ENCODE measurements at regions of chr2 and their contacts with region 1.

Region 1: DNA sequence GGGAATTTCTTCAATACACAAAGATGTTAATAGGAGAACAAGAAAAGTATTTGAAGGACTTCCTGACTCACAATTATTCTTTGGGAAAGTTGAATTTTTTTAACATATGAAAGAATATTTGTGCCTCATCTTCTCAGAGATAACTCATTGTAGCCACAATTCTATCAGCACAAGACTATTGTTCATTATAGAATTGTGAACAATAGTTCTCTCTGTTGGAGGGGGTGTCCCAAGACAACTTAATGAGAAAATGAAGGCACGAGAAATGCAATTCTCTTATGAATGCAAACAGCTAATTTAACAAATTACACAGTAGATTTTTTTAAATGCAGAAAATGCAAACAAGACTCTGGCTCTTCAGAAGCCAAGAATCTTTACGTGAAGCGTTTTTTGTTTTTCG is 157.0 kb downstream of the BARD1 start:
- DNase-seq: no peak
- ATAC-seq: no peak
- H3K4me3 Mint-ChIP-seq: no peak overlapping the region
- H3K27ac Mint-ChIP-seq: no peak overlapping the region
- H3K4me1 Mint-ChIP-seq: no peaks in the 10 kb centered on the region
- H3K27me3 Mint-ChIP-seq: peaks cover 3% of the 10 kb centered on the region

Region 2: GRCh38 chr2:214593727-214594126 is 58.7 kb before region 1 on chr2:
- CTCF ChIA-PET with region 1: no interaction called
- POLR2A ChIA-PET with region 1: no interaction called
- intact Hi-C with region 1: no loop called
- DNase-seq: no peak
- ATAC-seq: no peak
- H3K4me3 Mint-ChIP-seq: no peak overlapping the region
- H3K27ac Mint-ChIP-seq: no peak overlapping the region
- H3K4me1 Mint-ChIP-seq: no peaks in the 10 kb centered on the region
- H3K27me3 Mint-ChIP-seq: peaks cover 2% of the 10 kb centered on the region

Region 3: GRCh38 chr2:214624166-214624760 is 28.2 kb before region 1 on chr2:
- CTCF ChIA-PET with region 1: no interaction called
- POLR2A ChIA-PET with region 1: no interaction called
- intact Hi-C with region 1: loop called in 1 of 2 experiments (anchors 1 kb)
- DNase-seq: no peak
- ATAC-seq: no peak
- H3K4me3 Mint-ChIP-seq: no peak overlapping the region
- H3K27ac Mint-ChIP-seq: no peak overlapping the region
- H3K4me1 Mint-ChIP-seq: no peaks in the 10 kb centered on the region
- H3K27me3 Mint-ChIP-seq: no peaks in the 10 kb centered on the region

Region 4: GRCh38 chr2:214671319-214671885 is 18.9 kb after region 1 on chr2:
- CTCF ChIA-PET with region 1: no interaction called
- POLR2A ChIA-PET with region 1: no interaction called
- intact Hi-C with region 1: no loop called
- DNase-seq: no peak
- ATAC-seq: no peak
- H3K4me3 Mint-ChIP-seq: no peak overlapping the region
- H3K27ac Mint-ChIP-seq: no peak overlapping the region
- H3K4me1 Mint-ChIP-seq: no peaks in the 10 kb centered on the region
- H3K27me3 Mint-ChIP-seq: peaks cover 2% of the 10 kb centered on the region

Region 5: GRCh38 chr2:214876815-214877214 is 224.3 kb after region 1 on chr2:
- CTCF ChIA-PET with region 1: no interaction called
- POLR2A ChIA-PET with region 1: no interaction called
- intact Hi-C with region 1: no loop called
- DNase-seq: no peak
- ATAC-seq: no peak
- H3K4me3 Mint-ChIP-seq: no peak overlapping the region
- H3K27ac Mint-ChIP-seq: no peak overlapping the region
- H3K4me1 Mint-ChIP-seq: no peaks in the 10 kb centered on the region
- H3K27me3 Mint-ChIP-seq: peaks cover 3% of the 10 kb centered on the region